CD8-positive, alpha-beta T cell (primary cell): ENCODE measurements at regions of chr1 and their contacts with region 1.

Region 1: DNA sequence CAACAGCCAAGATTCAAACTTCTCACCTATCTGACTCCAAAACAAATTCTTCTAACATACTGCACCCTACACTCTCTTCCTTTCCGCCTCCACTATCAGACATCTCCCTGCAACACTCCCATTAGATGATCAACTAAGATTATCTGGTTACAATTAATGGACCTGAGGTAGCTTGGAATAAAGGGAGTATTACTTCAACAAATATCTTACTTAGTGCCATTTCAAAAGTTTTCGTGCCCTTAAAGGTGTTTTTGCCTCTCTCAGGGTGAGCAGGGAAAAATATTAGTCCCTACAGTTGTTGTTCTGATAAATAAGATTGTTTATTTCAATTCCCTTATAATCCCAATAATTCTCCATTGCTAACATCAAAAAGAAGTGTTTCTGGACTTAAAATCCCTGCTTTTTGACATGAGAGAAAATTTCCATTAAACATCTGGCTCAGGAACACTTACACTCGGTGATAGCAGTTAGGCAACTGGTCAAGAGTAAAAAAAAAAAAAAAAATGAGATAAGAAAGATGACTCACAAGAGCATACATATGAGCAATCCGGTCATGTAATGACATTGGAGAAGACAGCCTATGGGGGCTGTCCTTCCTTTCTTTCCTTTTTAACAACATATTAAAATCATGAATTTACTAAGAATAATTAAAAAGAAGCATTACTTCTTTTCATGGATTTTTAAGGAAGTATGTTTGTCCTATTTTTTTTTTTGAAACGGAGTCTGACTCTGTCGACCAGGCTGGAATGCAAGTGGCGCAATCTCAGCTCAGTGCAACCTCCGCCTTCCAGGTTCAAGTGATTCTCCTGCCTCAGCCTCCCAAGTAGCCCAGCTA is 7.6 kb downstream of the RSBN1 start:
- DNase-seq: no peak
- ATAC-seq: no peak
- H3K4me3 ChIP-seq: no peak overlapping the region
- H3K4me3 Mint-ChIP-seq: no peak overlapping the region
- H3K27ac ChIP-seq: no peak overlapping the region
- H3K27ac Mint-ChIP-seq: no peak overlapping the region
- H3K4me1 ChIP-seq: peaks cover 63% of the 10 kb centered on the region
- H3K4me1 Mint-ChIP-seq: peaks cover 79% of the 10 kb centered on the region
- H3K27me3 ChIP-seq: no peaks in the 10 kb centered on the region
- H3K27me3 Mint-ChIP-seq: no peaks in the 10 kb centered on the region
- CTCF ChIP-seq: no peak

Region 2: GRCh38 chr1:113793878-113794834 is 10.5 kb before region 1 on chr1:
- CTCF ChIA-PET with region 1: interaction called, 4 read pairs
- POLR2A ChIA-PET with region 1: no interaction called
- intact Hi-C with region 1: loop called (anchors 1 to 2 kb)
- DNase-seq: no peak
- ATAC-seq: no peak
- H3K4me3 ChIP-seq: no peak overlapping the region
- H3K4me3 Mint-ChIP-seq: no peak overlapping the region
- H3K27ac ChIP-seq: peak overlapping the region in 1 of 2 experiments; percentile 9
- H3K27ac Mint-ChIP-seq: peak overlapping the region; percentile 81
- H3K4me1 ChIP-seq: peaks cover 27% of the 10 kb centered on the region
- H3K4me1 Mint-ChIP-seq: peaks cover 67% of the 10 kb centered on the region
- H3K27me3 ChIP-seq: no peaks in the 10 kb centered on the region
- H3K27me3 Mint-ChIP-seq: no peaks in the 10 kb centered on the region
- CTCF ChIP-seq: no peak